Motor neuron (in vitro differentiated cells): ENCODE measurements at regions of chr6 and their contacts with region 1.

Region 1: GRCh38 chr6:153059761-153060160 is 57.3 kb upstream of the MTRF1L start:
- ATAC-seq: no peak
- H3K4me3 ChIP-seq: no peak overlapping the region
- H3K27ac ChIP-seq: no peak overlapping the region
- H3K4me1 ChIP-seq: peaks cover 0 to 10% of the 10 kb centered on the region in 2 donors

Region 2: DNA sequence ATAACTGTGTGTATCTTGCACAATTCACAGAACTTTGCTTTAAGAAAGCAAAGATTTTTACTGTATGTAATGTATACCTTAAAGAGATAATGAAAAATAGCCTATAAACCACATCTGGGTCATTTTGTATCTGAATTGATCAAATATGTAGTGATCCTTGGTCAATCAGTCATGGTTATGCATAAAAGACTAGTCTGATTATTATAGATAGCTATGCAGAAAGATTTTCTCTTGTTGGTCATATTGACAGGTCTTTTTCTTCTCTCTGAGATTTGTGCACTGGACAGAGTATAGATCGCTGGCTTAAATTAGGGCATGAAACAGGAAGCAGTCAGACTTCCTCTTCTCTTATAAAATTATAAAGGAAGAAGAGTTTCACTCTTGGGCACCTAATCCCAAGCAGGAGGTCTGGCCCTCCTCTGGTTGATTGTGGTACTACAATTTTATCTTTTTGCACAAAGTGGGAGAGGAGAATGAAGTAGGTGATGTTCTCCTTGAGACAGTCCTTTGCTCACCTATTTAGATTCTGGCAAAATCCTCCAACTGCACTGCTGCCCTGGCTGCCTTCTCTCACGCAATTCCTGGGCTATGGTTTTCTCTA is 452.2 kb after region 1 on chr6:
- in situ Hi-C with region 1: loop called in 1 of 9 experiments (anchors 25 kb)
- ATAC-seq: peak in 3 of 8 experiments; percentile 67 to 77 (median 69)
- H3K4me3 ChIP-seq: no peak overlapping the region
- H3K27ac ChIP-seq: no peak overlapping the region
- H3K4me1 ChIP-seq: no peaks in the 10 kb centered on the region